AG04449 (cell line): ENCODE measurements at regions of chr3 and their contacts with region 1.

Region 1: DNA sequence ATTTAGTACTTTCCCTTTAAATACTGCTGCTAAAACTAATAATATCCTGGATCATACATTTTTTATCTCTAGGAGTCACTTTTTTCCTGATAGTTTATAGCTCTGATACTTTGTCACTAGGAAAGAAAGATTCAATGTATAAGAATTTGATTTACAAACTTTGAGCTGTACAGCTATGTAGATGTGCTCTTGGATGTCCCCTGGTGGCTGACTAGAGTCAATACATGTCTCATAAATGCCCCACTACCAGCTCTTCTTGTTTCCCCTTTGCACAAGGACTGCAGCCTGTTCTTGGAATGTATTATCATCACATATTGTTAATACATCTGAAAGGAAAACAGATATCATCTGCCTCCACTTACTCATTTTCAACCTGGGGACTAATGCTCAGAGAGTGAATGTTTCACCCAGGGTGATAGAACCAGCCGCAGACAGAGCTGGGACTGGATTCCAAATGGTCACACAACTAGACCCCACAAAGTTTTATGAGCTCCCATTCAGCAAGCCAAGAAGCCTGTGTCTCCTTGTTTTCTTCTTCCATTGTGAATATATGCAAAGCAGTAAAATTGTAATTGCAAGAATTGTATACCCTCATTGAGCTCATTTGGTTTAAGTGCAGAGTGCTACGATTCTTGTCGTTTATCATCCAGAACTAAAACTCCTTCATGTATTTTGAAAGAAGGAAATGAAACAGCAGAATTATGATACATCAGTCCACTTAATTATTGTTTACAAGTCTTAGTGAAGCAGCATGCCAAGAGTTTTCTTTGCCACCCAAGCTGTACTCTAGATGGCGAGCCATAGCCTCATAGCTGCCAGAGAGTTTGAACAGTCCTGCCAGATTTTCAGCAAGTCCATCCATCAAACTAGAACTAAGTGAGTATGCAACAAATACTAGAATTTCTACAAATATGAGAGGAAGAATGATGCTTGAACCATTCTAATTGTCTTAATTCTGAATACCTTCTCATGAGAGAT is 261.6 kb upstream of the LMCD1 start:
- DNase-seq: peak; percentile 21
- H3K4me3 ChIP-seq: no peak overlapping the region
- CTCF ChIP-seq: peak; percentile 81

Region 2: GRCh38 chr3:7841451-7841850 is 398.6 kb before region 1 on chr3:
- CTCF ChIA-PET with region 1: no interaction called
- POLR2A ChIA-PET with region 1: no interaction called
- DNase-seq: no peak
- H3K4me3 ChIP-seq: no peak overlapping the region
- CTCF ChIP-seq: no peak

Region 3: GRCh38 chr3:7977245-7978103 is 262.5 kb before region 1 on chr3:
- CTCF ChIA-PET with region 1: no interaction called
- POLR2A ChIA-PET with region 1: no interaction called
- DNase-seq: no peak
- H3K4me3 ChIP-seq: no peak overlapping the region
- CTCF ChIP-seq: no peak

Region 4: GRCh38 chr3:8111069-8111798 is 128.8 kb before region 1 on chr3:
- CTCF ChIA-PET with region 1: interaction called, 10 read pairs
- POLR2A ChIA-PET with region 1: no interaction called
- DNase-seq: no peak
- H3K4me3 ChIP-seq: no peak overlapping the region
- CTCF ChIP-seq: peak; percentile 67

Region 5: GRCh38 chr3:8166006-8166405 is 74.0 kb before region 1 on chr3:
- CTCF ChIA-PET with region 1: no interaction called
- POLR2A ChIA-PET with region 1: no interaction called
- DNase-seq: no peak
- H3K4me3 ChIP-seq: no peak overlapping the region
- CTCF ChIP-seq: no peak

Region 6: DNA sequence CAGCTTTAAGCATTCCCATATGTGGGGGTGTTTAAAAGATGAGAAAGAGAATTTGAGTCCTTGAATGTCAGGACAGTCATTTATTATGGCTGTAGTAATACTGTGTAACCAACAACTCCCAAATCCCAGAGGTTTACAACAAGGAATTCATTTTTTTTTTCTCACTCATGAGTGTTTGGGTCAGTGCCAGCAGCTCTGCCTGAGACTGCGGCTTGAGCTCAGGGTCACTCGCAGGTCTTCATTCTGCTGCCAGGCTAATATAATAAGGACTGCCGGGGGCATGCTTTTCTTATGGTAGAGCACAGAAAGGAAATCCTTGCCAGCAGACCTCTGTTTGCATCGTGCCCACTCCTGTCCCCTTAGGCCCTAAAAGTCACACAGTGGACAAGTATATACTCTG is 16.2 kb before region 1 on chr3:
- CTCF ChIA-PET with region 1: interaction called, 47 read pairs
- POLR2A ChIA-PET with region 1: no interaction called
- DNase-seq: no peak
- H3K4me3 ChIP-seq: no peak overlapping the region
- CTCF ChIP-seq: no peak

Region 7: GRCh38 chr3:8254489-8254888 is 14.5 kb after region 1 on chr3:
- CTCF ChIA-PET with region 1: interaction called, 10 read pairs
- POLR2A ChIA-PET with region 1: no interaction called
- DNase-seq: no peak
- H3K4me3 ChIP-seq: no peak overlapping the region
- CTCF ChIP-seq: no peak

Region 8: GRCh38 chr3:8278448-8278847 is 38.4 kb after region 1 on chr3:
- CTCF ChIA-PET with region 1: no interaction called
- POLR2A ChIA-PET with region 1: no interaction called
- DNase-seq: no peak
- H3K4me3 ChIP-seq: no peak overlapping the region
- CTCF ChIP-seq: no peak

Region 9: DNA sequence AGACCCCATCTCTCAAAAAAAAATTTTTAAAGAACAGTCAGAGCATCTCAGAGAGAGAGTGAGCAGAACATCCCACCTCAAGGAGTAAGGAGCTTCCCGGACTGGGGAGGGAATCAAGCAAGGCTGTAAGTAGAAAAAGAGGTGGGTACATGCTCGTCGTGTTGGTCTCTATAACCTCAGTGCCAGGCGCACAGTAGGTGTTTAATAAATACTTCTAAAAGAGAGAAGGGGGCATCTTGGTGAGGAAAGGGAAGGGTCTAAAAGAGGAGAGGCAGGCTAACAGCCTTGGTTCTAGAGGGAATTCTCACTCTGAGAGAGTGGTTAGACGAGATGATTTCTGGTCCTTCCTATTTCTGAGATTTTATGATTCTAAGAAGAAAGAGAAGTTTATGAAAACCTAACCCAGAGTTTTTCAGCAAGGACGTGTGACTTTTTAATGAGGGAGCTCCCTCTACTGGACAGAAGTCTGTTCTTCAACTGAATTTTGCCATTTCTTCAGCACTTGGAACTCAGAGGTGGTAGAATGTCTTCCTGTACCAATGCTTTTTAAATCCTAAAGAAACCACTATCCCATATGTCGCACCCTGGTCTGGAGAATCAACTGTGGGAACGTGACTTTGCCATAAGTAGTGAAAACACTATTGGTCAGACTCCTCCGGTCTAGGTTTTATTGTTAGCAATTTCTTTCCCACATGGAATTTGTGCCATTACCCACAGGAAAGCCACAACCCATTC is 61.9 kb after region 1 on chr3:
- CTCF ChIA-PET with region 1: interaction called, 23 read pairs
- POLR2A ChIA-PET with region 1: no interaction called
- DNase-seq: peak; percentile 26
- H3K4me3 ChIP-seq: no peak overlapping the region
- CTCF ChIP-seq: peak; percentile 59